ENCODE measurements at regions of chr7 and their contacts with region 1.

Region 1: GRCh38 chr7:37942934-37943610 is 22.6 kb downstream of the EPDR1 start:
- DNase-seq: peak; percentile 60 to 81
- ATAC-seq: peak; percentile 86 to 95
- H3K4me3 ChIP-seq: no peak overlapping the region
- H3K27ac ChIP-seq: peak overlapping the region; percentile 70 to 84 (median 78)
- H3K4me1 ChIP-seq: peaks cover 51 to 52% of the 10 kb centered on the region in 2 donors
- H3K27me3 ChIP-seq: no peaks in the 10 kb centered on the region
- CTCF ChIP-seq: no peak
- POLR2A ChIP-seq: no peak

Region 2: DNA sequence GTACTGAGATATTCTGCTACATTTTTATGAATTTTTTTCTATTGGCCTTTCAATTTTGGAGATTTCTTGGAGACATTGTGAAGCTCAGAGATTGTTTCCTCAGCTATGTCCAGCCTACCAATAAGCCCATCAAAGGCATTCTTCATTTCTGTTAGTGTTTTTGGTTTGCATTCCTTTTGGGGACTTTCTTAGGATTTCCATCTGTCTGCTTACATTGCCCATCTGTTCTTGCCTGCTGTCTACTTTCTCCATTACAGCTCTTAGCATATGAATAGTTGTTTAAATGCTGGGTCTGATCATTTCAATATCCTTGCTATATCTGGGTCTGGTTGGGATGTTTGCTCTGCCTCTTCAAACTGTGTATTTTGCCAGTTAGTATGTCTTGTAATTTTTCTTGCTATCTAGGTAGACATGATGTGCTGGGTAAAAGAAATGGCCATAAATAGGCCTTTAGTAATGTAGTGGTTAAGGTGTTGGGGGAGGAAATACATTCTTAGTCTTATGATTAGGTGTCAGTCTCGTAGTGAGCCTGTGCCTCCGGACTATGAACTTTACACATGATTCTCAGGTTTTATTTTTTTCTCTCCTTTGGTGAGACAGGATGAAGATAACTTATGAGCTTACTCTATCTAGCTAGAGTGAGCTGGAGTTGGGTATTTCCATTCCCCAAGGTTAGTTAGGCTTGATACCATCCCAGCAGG is 127.3 kb before region 1 on chr7:
- in situ Hi-C with region 1: no loop called
- intact Hi-C with region 1: no loop called
- DNase-seq: no peak
- ATAC-seq: no peak
- H3K4me3 ChIP-seq: no peak overlapping the region
- H3K27ac ChIP-seq: no peak overlapping the region
- H3K4me1 ChIP-seq: no peaks in the 10 kb centered on the region
- H3K27me3 ChIP-seq: no peaks in the 10 kb centered on the region
- CTCF ChIP-seq: no peak
- POLR2A ChIP-seq: no peak

Region 3: GRCh38 chr7:37924491-37925041 is 18.5 kb before region 1 on chr7:
- in situ Hi-C with region 1: no loop called
- intact Hi-C with region 1: loop called (anchors 2 kb)
- DNase-seq: no peak
- ATAC-seq: no peak
- H3K4me3 ChIP-seq: no peak overlapping the region
- H3K27ac ChIP-seq: peak overlapping the region in 3 of 4 donors; percentile 20 to 90 (median 25)
- H3K4me1 ChIP-seq: peaks cover 22 to 30% of the 10 kb centered on the region in 2 donors
- H3K27me3 ChIP-seq: no peaks in the 10 kb centered on the region
- CTCF ChIP-seq: no peak
- POLR2A ChIP-seq: no peak

Region 4: DNA sequence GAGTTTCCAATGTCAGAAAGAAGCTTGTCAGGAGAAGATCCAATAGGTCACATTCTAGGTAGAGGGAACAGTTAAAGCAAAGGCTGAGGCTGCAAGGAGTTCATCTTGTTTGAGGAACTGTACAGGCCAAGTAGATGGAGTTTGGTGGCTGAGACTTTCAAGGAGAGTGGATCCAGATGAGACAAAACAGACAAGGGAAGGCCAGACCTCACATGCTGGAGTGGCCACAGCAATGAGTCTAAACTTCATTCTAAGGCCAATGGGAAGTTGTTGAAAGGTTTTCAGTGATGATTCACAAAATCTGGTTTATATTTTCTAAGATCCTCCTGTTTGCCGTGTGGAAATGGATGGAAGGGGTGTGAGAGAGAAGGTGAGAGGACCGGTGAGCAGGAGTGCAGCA is 17.4 kb after region 1 on chr7:
- in situ Hi-C with region 1: no loop called
- intact Hi-C with region 1: no loop called
- DNase-seq: no peak
- ATAC-seq: no peak
- H3K4me3 ChIP-seq: no peak overlapping the region
- H3K27ac ChIP-seq: no peak overlapping the region
- H3K4me1 ChIP-seq: no peaks in the 10 kb centered on the region
- H3K27me3 ChIP-seq: no peaks in the 10 kb centered on the region
- CTCF ChIP-seq: no peak
- POLR2A ChIP-seq: no peak

Measured in gastrocnemius medialis (tissue), 4 donors.